ENCODE measurements at regions of chr10 and their contacts with region 1.

Region 1: DNA sequence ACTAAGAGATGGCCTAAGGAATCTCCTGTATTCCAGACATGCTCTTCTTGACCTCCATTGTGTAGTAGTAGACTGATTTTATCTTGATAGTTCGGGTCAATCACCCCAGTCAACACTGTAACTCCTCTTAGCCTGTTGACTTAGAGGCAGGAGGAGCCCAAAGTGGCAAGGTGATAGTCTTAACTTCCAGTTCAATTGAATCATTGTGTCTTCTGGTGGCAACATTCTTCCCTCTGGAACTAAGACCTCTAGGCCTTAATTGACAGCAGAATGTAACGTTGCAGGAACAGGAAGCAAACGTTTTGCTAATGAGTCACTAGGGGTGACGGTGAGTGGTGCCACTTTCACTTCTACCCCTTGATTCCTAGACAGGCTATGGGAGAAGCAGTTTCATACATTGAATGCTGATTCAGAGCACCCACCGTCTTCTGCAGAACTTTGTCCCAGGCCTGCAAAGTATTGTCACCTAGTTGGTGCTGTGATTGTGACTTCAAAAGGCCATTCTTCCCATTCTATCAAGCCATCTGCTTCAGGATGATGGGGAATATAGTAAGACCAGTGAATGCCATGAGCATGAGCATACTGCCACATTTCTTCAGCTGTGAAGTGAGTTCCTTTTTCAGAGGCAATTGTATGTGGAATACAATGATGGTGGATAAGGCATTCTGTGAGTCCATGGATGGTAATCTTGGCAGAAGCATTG is 23.9 kb upstream of the PAPSS2 start:
- DNase-seq: peak; percentile 76
- H3K4me3 Mint-ChIP-seq: no peak overlapping the region
- H3K27ac Mint-ChIP-seq: no peak overlapping the region
- H3K4me1 Mint-ChIP-seq: peaks cover 17% of the 10 kb centered on the region
- H3K27me3 Mint-ChIP-seq: no peaks in the 10 kb centered on the region

Region 2: DNA sequence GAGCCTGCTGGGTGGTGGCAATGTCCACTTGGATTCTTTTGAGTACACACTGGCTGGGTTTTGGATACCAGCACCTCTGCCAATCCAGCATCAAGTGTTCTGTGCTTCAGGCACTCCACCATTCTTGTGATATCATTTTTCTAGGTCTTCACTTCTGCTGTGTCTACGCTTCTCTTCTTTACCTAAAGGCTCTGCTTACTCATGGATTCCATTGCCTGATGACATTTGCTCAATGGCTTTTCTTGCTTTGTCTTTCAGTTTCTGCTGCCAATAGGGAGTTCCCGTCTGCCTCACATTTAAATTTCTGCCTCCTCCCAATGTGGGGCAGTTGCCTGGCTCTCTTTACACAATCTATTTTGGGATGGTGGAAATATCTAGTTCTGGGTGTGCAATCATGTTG is 11.2 kb after region 1 on chr10:
- CTCF ChIA-PET with region 1: no interaction called
- POLR2A ChIA-PET with region 1: no interaction called
- intact Hi-C with region 1: loop called (anchors 1 kb)
- DNase-seq: no peak
- H3K4me3 Mint-ChIP-seq: no peak overlapping the region
- H3K27ac Mint-ChIP-seq: no peak overlapping the region
- H3K4me1 Mint-ChIP-seq: peaks cover 15% of the 10 kb centered on the region
- H3K27me3 Mint-ChIP-seq: no peaks in the 10 kb centered on the region